ENCODE measurements at regions of chr4 and their contacts with region 1.

Region 1: GRCh38 chr4:1266881-1267763 is 18.2 kb upstream of the CTBP1 start:
- DNase-seq: no peak
- H3K4me3 ChIP-seq: no peak overlapping the region
- H3K27me3 ChIP-seq: no peaks in the 10 kb centered on the region
- CTCF ChIP-seq: no peak

Region 2: DNA sequence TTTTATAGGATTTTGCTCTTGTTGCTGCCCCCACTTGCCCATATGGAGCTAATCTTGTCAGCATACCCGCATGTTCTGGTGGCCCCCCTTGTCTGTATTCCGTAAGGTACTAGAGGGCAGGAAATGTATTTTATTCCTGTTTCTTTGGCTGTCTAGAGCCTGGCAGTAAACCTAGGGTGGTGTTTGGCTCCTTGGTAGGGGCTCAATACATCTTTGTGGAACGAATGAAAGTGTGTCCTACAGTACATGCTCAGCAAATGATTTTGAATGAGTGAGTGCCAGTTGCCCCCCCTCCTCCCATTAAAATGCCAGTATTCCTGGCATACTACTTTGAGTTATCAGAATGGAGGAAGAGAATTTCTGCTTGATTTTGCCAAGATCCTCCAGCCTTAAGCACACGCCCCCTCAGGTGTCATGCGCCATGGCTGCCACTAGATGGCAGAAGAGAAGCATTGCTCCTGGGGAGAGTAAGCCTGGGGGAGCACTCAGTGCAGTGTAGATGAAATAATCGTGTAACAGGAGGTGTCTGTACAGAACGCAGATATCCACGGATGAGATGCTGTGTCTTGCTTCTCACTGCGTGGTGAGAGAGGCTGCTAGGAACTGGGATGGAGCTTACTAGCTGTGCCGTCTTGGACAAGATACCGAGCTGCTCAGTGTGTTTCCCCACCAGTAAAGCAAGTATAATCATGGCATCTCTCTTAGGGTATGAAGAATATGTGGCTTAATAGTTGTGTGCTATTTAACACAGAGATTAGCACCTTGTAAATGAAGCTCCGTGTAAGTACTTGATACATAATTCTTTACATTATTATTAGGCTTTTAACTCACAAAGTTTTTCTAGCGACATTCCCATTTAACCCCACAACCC is 136.6 kb before region 1 on chr4:
- CTCF ChIA-PET with region 1: interaction called, 120 read pairs
- POLR2A ChIA-PET with region 1: no interaction called
- DNase-seq: peak; percentile 22
- H3K4me3 ChIP-seq: no peak overlapping the region
- H3K27me3 ChIP-seq: peaks cover 3% of the 10 kb centered on the region
- CTCF ChIP-seq: peak; percentile 100

Region 3: GRCh38 chr4:1167247-1167949 is 99.7 kb before region 1 on chr4:
- CTCF ChIA-PET with region 1: interaction called, 71 read pairs
- POLR2A ChIA-PET with region 1: no interaction called
- DNase-seq: no peak
- H3K4me3 ChIP-seq: peak overlapping the region; percentile 43
- H3K27me3 ChIP-seq: peaks cover 3% of the 10 kb centered on the region; the same call in 1 of the 2 replicates
- CTCF ChIP-seq: peak; percentile 94

Region 4: GRCh38 chr4:1255151-1255550 is 12.0 kb before region 1 on chr4:
- CTCF ChIA-PET with region 1: interaction called, 23 read pairs
- POLR2A ChIA-PET with region 1: no interaction called
- DNase-seq: no peak
- H3K4me3 ChIP-seq: no peak overlapping the region
- H3K27me3 ChIP-seq: no peaks in the 10 kb centered on the region
- CTCF ChIP-seq: no peak

Region 5: GRCh38 chr4:1285790-1286553 is 18.9 kb after region 1 on chr4:
- CTCF ChIA-PET with region 1: interaction called, 17 read pairs
- POLR2A ChIA-PET with region 1: no interaction called
- DNase-seq: no peak
- H3K4me3 ChIP-seq: no peak overlapping the region
- H3K27me3 ChIP-seq: no peaks in the 10 kb centered on the region
- CTCF ChIP-seq: peak; percentile 29

Region 6: GRCh38 chr4:1318488-1319213 is 51.5 kb after region 1 on chr4:
- CTCF ChIA-PET with region 1: no interaction called
- POLR2A ChIA-PET with region 1: no interaction called
- DNase-seq: no peak
- H3K4me3 ChIP-seq: no peak overlapping the region
- H3K27me3 ChIP-seq: no peaks in the 10 kb centered on the region
- CTCF ChIP-seq: peak; percentile 27

Measured in BJ (cell line).